Mammary epithelial cell (primary cell): ENCODE measurements at regions of chr4 and their contacts with region 1.

Region 1: DNA sequence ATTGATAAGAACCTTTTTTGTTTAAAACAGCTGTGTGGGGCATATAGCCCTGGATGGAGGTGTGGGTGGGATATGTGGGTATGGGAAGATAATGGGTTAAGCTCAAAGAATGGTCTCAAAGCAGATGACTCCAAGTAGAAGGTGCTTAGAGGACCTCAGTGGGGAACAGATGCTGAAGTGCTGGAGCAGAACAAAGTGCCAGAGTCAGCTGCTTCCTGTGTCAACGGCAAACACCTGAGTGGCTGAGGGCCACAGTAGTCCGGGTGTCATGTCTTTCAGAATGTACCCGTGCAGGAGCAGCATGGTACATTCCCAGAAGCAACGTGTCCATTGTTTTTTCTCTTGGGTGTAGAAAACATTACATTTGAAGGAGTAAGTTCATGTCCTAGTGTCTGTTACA is 210.6 kb downstream of the CCNG2 start:
- DNase-seq: no peak
- H3K4me3 ChIP-seq: no peak overlapping the region
- H3K27ac ChIP-seq: no peak overlapping the region
- H3K4me1 ChIP-seq: no peaks in the 10 kb centered on the region
- H3K27me3 ChIP-seq: peaks cover 2% of the 10 kb centered on the region
- CTCF ChIP-seq: no peak

Region 2: GRCh38 chr4:77418333-77419038 is 50.8 kb after region 1 on chr4:
- CTCF ChIA-PET with region 1: interaction called, 3 read pairs
- dilution Hi-C with region 1: loop called (anchors 5 kb)
- in situ Hi-C with region 1: no loop called
- intact Hi-C with region 1: no loop called
- DNase-seq: peak; percentile 21
- H3K4me3 ChIP-seq: no peak overlapping the region
- H3K27ac ChIP-seq: no peak overlapping the region
- H3K4me1 ChIP-seq: no peaks in the 10 kb centered on the region
- H3K27me3 ChIP-seq: no peaks in the 10 kb centered on the region
- CTCF ChIP-seq: peak; percentile 43 to 56

Region 3: GRCh38 chr4:77433418-77433733 is 65.7 kb after region 1 on chr4:
- CTCF ChIA-PET with region 1: interaction called, 3 read pairs
- dilution Hi-C with region 1: no loop called
- in situ Hi-C with region 1: no loop called
- intact Hi-C with region 1: loop called (anchors 1 kb)
- DNase-seq: peak; percentile 44
- H3K4me3 ChIP-seq: no peak overlapping the region
- H3K27ac ChIP-seq: no peak overlapping the region
- H3K4me1 ChIP-seq: no peaks in the 10 kb centered on the region
- H3K27me3 ChIP-seq: no peaks in the 10 kb centered on the region
- CTCF ChIP-seq: peak; percentile 46 to 66

Region 4: DNA sequence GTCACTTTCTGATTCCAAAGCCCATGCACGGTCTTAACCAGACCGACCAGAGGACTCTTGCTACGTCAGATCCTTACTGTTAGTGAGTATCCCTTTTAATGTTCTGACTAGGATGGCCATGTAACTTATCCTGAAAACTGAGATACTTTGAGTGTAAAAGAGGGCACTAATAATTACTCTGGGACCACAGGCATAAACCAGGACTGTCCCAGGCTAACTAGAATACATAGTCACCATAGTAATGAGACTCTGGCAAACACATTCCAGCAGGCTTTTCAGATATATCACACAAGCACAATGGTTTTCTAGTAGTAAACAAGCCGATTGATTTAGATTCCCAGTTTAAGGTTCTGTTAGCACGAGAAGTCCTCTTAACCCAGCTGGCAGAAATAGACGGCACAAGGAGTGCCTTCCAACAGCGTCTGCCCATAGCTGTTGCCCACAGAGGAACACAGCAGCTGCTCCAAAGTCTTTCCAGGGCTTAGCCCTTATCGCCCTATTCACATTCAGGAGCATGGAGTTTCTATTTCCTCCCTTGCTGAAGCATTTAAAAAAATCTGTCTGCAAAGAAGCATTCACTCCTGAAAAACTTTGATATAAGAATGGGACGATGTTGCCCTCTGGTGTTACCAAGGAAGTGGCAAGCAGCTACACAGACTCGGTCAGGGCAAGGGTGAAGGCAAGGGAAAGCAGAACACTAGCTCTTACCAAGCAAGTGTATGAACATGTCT is 330.4 kb after region 1 on chr4:
- CTCF ChIA-PET with region 1: interaction called, 5 read pairs
- dilution Hi-C with region 1: no loop called
- in situ Hi-C with region 1: loop called in 1 of 2 experiments (anchors 5 kb)
- intact Hi-C with region 1: loop called (anchors 5 kb)
- DNase-seq: peak; percentile 64
- H3K4me3 ChIP-seq: no peak overlapping the region
- H3K27ac ChIP-seq: no peak overlapping the region
- H3K4me1 ChIP-seq: peaks cover 30% of the 10 kb centered on the region
- H3K27me3 ChIP-seq: no peaks in the 10 kb centered on the region
- CTCF ChIP-seq: peak; percentile 63 to 77

Region 5: DNA sequence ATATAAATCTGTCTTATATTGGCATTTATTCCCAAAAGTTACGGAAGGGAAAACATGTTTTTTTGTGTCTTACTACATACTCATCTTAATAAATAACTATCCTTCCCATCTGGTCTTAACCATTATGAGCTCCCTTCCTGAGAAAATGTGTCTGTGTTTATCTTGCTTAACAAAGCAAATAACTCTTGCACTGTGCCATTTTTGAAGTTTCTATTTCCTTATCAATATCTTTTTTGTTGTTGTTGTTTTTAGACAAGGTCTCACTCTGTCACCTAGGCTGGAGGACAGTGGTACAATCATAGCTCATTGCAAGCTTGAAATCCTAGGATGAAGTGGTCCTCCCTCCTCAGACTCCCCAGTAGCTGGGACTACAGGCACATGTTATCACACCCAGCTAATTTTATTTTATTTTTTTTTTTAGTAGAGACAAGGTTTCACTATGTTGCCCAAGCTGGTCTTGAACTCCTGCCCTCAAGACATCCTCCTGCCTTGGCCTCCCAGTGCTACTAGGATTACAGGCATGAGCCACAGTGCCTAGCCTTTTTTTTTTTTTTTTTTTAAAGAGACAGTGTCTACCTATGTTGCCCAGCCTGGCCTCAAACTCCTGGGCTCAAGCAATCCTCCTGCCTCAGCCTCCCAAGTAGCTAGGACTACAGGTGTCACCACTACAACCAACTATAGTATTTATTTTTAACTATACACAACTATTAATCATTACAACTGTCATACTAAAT is 414.6 kb after region 1 on chr4:
- CTCF ChIA-PET with region 1: no interaction called
- dilution Hi-C with region 1: no loop called
- in situ Hi-C with region 1: no loop called
- intact Hi-C with region 1: no loop called
- DNase-seq: no peak
- H3K4me3 ChIP-seq: no peak overlapping the region
- H3K27ac ChIP-seq: no peak overlapping the region
- H3K4me1 ChIP-seq: peaks cover 2% of the 10 kb centered on the region
- H3K27me3 ChIP-seq: no peaks in the 10 kb centered on the region
- CTCF ChIP-seq: no peak

Region 6: GRCh38 chr4:77881460-77882278 is 514.0 kb after region 1 on chr4:
- CTCF ChIA-PET with region 1: interaction called, 10 read pairs
- dilution Hi-C with region 1: no loop called
- in situ Hi-C with region 1: no loop called
- intact Hi-C with region 1: no loop called
- DNase-seq: peak; percentile 14
- H3K4me3 ChIP-seq: no peak overlapping the region
- H3K27ac ChIP-seq: peak overlapping the region; percentile 84
- H3K4me1 ChIP-seq: peaks cover 33% of the 10 kb centered on the region
- H3K27me3 ChIP-seq: no peaks in the 10 kb centered on the region
- CTCF ChIP-seq: no peak

Region 7: GRCh38 chr4:78092850-78093249 is 725.2 kb after region 1 on chr4:
- CTCF ChIA-PET with region 1: no interaction called
- dilution Hi-C with region 1: no loop called
- in situ Hi-C with region 1: no loop called
- intact Hi-C with region 1: no loop called
- DNase-seq: no peak
- H3K4me3 ChIP-seq: no peak overlapping the region
- H3K27ac ChIP-seq: no peak overlapping the region
- H3K4me1 ChIP-seq: no peaks in the 10 kb centered on the region
- H3K27me3 ChIP-seq: no peaks in the 10 kb centered on the region
- CTCF ChIP-seq: no peak